Left ventricle myocardium superior (tissue), 1 donor: ENCODE measurements at regions of chr9 and their contacts with region 1.

Region 1: DNA sequence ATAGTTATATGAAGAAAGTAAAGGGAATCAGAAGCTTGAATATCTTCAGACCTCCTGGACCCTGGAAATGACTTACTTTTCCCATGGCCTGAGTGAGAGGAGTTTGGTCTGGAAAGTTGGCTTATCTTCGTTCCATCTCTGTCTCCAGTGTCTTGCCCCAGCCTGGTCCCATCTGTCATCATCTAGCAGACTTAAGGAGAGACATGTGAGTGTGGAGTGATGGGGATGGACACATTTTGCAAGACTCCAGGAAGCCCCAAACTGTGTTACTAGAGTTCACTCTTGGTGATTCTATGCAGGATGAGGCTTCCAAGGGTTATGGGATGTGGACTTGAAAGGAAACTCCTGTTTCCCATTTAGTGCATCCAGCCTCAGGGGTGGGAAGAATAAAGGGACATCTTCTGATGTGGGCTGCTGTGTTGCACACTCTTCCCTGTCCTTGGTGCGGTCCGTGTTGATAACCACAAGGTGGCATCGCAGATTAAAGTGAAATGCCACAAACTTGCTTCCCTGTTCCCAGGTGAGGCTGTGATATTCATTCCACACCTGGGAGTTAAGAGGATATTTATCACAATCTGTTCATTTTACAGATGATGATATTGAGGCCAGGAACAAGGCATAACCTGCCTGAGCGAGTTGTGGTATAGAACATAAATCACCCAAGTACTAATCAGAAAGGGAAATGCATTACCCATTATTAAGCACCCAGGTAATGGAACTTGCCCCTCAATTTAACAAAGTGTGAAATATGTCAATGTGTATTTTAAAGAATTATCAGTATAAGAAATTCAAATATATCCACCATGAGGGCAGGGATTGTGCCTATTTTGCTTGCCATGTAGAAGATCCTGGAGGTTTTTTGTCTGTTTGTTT is 269.9 kb upstream of the PAPPA start:
- DNase-seq: peak; percentile 25
- ATAC-seq: peak; percentile 76

Region 2: GRCh38 chr9:116000748-116001329 is 117.1 kb after region 1 on chr9:
- intact Hi-C with region 1: loop called (anchors 10 kb)
- DNase-seq: no peak
- ATAC-seq: peak; percentile 55

Region 3: DNA sequence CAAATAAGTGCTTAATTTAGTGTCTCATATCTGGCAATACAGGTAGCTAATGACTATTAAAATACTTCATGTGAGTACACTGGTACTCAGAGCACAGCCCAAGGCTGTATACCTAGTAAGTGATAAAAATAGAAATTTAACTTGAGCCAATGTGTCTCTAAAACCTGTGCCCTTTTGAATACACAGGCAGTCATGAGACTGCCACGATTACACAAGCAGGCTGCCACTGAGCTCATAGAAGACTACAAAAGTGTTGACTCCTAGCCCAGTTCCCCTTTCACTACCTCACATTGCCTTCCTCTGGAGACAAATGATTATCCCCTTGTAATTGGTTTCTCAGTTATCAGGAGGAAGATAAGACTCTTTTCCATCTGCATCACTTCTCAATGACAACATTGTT is 203.6 kb after region 1 on chr9:
- intact Hi-C with region 1: loop called (anchors 10 kb)
- DNase-seq: peak; percentile 53
- ATAC-seq: peak; percentile 93

Region 4: GRCh38 chr9:116149844-116150243 is 266.2 kb after region 1 on chr9:
- intact Hi-C with region 1: loop called (anchors 10 kb)
- DNase-seq: no peak
- ATAC-seq: peak; percentile 52